ENCODE measurements at regions of chr10 and their contacts with region 1.

Region 1: GRCh38 chr10:100327007-100327717 is 2.9 kb downstream of the PKD2L1 start:
- DNase-seq: peak; percentile 82
- H3K4me3 Mint-ChIP-seq: peak overlapping the region; percentile 5
- H3K27ac Mint-ChIP-seq: peak overlapping the region; percentile 80
- H3K4me1 Mint-ChIP-seq: peaks cover 16% of the 10 kb centered on the region
- H3K27me3 Mint-ChIP-seq: peaks cover 4% of the 10 kb centered on the region

Region 2: DNA sequence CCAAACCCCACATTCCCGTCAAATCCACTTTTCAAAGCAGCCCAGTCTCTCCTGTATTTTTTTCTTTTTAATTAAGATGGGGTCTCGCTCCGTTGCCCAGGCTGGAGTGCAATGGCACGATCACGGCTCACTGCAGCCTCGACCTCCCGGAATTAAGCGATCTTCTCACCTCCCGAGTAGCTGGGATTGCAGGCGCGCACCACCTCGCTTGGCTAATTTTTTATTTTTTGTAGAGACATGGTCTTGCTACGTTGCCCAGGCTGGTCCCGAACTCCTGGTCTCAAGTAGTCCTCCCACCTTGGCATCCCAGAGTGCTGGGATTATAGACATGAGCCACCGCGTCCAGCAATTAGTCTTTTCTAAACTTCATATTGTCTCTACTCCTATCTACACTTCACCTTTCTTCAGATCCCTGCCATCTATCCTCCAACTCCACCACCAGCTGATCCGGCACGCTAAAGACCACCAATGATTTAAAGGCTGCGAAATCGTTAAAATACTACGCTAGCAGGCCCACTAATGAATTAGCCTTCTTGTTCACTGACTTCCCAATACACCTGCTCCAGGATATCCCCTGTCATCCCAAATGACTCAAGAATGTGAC is 97.2 kb before region 1 on chr10:
- CTCF ChIA-PET with region 1: interaction called, 5 read pairs
- intact Hi-C with region 1: loop called (anchors 1 kb)
- DNase-seq: no peak
- H3K4me3 Mint-ChIP-seq: peak overlapping the region; percentile 91
- H3K27ac Mint-ChIP-seq: peak overlapping the region; percentile 90
- H3K4me1 Mint-ChIP-seq: peaks cover 31% of the 10 kb centered on the region
- H3K27me3 Mint-ChIP-seq: no peaks in the 10 kb centered on the region

Region 3: GRCh38 chr10:100267237-100268104 is 59.7 kb before region 1 on chr10 and contains the start of gene CWF19L1:
- CTCF ChIA-PET with region 1: no interaction called
- intact Hi-C with region 1: loop called (anchors 2 kb)
- DNase-seq: peak; percentile 90
- H3K4me3 Mint-ChIP-seq: peak within 1 kb of the TSS; percentile 100
- H3K27ac Mint-ChIP-seq: peak within 1 kb of the TSS; percentile 97
- H3K4me1 Mint-ChIP-seq: peaks cover 29% of the 10 kb centered on the region
- H3K27me3 Mint-ChIP-seq: no peaks in the 10 kb centered on the region
- total RNA-seq, gene CWF19L1: 35.3 to 35.4 TPM

Region 4: GRCh38 chr10:100346765-100347567 is 19.8 kb after region 1 on chr10 and contains the start of gene SCD:
- CTCF ChIA-PET with region 1: interaction called, 4 read pairs
- intact Hi-C with region 1: loop called (anchors 1 kb)
- DNase-seq: peak; percentile 95
- H3K4me3 Mint-ChIP-seq: peak within 1 kb of the TSS; percentile 97
- H3K27ac Mint-ChIP-seq: peak within 1 kb of the TSS; percentile 87
- H3K4me1 Mint-ChIP-seq: peaks cover 45% of the 10 kb centered on the region
- H3K27me3 Mint-ChIP-seq: no peaks in the 10 kb centered on the region
- total RNA-seq, gene SCD: 161 to 169 TPM

Region 5: GRCh38 chr10:100470367-100470766 is 143.2 kb after region 1 on chr10:
- CTCF ChIA-PET with region 1: no interaction called
- intact Hi-C with region 1: no loop called
- DNase-seq: no peak
- H3K4me3 Mint-ChIP-seq: no peak overlapping the region
- H3K27ac Mint-ChIP-seq: no peak overlapping the region
- H3K4me1 Mint-ChIP-seq: no peaks in the 10 kb centered on the region
- H3K27me3 Mint-ChIP-seq: no peaks in the 10 kb centered on the region

Region 6: DNA sequence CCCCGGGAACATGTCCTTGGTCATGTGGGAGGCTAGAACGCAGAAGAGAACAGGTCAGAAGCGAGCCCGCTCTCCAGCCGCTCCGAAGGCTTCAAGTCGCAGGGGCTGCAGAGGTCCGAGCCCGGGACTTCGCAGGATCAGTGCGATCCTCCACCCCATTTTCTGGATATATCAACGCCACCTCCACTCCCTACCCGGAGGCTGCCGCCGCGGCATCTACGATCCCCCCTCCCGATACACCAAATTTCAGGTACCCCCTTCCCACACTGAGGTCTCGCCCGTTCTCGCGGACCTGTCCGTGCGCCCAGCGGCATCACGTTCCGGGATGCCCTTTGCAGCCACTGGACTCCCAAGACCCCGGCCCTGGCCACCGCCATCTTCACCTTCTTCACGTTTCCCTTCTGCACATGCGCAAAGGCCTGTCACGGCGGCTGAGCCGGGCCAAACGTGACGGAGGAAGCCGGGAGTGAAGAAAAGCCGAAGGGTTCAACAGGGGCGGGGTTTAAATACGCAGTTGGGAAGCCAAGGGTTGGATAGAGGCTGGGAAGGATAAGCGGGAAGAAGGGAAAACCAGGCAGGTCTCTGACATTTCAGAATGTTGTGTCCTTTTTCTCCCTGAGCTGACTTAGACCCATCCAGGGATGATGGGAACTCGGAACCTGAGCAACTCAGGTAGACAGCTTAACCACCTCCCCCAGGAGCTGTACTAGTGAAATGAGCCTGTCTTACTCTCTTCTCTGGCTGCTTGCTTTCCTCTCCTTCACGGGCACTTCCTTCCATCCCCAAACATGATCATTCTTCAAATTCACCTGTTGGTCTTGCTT is 202.5 kb after region 1 on chr10 and contains the start of gene NDUFB8:
- CTCF ChIA-PET with region 1: no interaction called
- intact Hi-C with region 1: loop called (anchors 1 kb)
- DNase-seq: peak; percentile 95
- H3K4me3 Mint-ChIP-seq: peak within 1 kb of the TSS; percentile 100
- H3K27ac Mint-ChIP-seq: peak within 1 kb of the TSS; percentile 95
- H3K4me1 Mint-ChIP-seq: peaks cover 37% of the 10 kb centered on the region
- H3K27me3 Mint-ChIP-seq: no peaks in the 10 kb centered on the region
- total RNA-seq, gene NDUFB8: 427 to 442 TPM